GM18951 (cell line): ENCODE measurements at regions of chr11 and their contacts with region 1.

Region 1: DNA sequence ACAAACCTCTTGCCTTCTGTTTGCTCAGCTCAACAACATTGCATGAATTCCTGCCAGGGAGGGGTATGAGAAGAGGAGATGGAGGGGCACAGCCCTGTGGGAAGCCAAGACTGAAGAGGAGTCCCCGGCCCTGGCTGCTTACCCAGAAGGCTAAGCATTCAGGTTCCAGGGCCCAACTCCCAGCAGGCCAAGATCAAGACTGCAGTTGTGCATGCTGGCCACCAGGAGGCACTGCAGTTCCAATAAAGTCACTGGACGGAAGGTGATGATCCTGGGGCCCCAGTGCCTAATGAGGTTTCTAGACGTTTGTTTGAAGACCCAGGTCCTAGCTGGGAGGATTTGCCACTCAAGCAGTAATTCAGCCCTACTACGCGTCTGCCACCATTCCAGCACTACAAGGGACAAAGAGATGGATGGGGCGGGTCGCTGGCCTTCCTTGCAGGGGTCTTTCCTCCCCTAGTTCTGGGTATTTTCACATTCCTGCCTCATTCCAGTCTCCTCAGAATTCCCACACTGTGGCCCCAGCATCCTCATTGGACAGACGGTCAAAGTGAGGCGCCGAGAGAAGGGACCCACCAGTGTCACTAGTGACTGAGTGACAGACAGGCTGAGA is 23.6 kb downstream of the ALX4 start:
- POLR2A ChIP-seq: no peak

Region 2: DNA sequence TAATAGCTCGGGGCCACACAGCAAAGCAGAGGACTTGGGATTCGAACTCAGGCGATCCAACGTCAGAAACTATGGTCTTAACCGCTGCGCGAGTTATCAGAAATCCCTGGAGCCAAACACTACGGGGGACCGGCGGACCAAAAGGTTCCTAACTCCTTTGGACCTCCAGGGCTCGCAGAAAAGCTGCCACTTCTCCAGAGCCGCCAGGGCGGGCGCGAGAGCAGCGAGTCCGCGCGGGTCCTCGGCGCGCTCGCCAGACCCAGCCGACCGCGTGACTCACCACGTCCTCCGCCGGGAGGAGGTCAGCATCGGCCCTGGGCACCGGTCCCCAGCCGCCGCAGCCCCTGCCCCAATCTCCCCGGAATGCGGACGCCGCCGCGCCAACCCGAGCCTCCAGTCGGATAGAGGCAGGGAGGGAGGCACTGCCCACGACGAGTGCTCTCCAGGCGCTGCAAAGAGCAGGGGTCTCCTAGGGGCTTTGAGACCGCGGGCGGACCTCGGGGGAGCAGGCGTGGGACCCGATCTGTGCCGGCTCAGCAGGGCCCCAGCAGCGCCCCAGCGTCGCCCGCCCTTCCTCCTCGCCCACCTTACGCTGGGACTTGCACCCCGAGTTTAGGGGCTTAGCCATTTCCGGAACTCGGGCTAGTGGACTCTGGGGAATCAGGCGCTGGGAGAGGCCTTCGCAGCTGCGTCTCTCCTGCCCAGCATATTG is 29.7 kb after region 1 on chr11:
- in situ Hi-C with region 1: no loop called
- POLR2A ChIP-seq: no peak

Region 3: DNA sequence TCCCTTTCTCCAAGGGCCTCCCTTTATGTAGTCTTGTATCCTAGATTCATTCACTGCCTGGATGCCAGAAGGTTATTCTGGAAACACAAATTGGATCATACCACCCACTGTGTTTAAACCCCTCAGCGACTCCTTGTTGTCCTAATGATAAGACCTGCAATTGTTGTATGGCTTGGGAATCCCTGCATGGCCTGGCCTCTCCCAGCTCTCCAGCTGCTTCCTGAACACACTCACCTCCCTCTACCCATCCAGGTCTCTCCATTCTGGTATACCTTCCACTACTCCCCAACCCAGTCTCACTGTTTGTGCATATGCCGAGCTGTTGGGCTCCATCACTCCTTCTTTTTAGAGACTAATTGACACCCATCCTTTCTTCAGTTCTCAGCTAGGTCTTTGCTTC is 147.8 kb after region 1 on chr11:
- in situ Hi-C with region 1: no loop called
- POLR2A ChIP-seq: no peak

Region 4: DNA sequence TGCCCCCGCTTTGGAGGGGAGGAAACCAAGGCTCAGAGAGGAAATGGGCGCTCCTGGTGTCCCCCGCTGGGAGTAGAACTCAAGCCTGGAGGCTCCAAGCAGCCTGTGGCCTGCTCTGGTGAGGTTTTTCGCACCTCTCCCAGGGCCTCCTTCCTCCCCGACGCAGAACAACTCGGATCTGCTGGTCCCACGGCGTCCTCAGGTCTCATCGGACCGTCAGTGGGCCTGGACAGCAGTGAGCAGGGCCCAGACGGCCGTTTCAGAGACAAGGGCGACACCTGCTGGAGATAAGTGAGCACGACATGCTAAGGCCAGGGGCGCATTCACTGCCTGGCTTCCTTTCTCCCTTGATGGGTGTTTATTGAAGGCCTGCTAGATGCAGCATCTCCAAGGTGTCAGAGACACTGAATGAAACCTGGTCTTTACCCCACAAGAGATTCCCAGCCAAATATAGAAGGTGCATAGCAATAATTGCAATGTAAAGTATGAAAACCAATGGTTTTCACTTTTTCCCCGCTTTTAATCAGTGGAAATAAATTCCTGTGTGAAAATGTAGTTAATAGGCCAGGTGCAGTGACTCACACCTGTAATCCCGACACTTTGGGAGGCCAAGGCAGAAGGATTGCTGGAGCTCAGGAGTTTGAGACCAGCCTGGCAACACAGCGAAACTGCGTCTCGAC is 252.1 kb after region 1 on chr11:
- in situ Hi-C with region 1: loop called (anchors 5 kb)
- POLR2A ChIP-seq: no peak